Esophagus muscularis mucosa (tissue), 4 donors: ENCODE measurements at regions of chr5 and their contacts with region 1.

Region 1: DNA sequence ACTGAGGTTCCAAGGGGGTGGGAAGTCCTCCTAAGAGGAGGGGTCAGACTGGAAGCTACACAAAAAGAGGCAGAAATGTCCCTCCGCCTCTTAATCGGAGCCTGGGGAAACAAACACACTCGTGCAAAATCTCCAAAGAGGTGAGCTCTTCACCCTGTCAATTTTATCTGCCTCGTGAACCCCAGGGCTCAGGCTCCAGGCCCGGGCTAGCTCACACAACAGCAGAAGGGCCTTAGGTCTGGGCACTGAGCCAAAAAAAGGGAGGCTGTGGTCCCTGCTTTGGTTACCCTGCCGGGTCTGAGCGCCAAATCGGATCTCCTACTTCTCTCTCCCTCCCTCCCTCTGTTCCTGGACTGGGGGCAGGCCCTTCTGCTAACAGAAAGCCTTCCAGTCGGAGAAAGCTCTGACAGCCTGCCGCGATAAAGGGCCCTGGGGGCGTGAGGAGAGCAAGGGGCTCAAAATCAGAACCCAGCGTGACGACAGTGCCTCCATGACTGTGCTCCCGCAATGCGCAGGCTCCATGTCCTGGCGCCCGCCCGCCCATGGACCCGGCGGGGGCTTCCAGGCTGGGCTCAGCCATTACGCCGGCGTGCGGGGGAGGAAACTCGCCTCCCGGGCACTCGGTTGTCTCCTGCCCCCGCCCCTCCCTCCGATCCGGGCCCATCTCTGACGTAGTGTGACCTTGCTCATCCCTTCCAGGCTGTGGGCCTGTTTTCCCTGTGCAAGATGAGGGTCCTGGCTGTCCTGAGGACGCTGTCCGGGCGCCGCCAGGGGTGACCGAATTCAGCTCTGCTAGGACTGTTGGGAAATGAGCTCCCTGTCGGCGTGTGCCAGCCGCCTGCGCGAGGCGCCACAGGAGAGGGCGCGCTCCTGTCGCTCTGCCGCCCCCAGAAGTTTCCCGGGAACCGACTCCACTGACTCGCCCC is 865 bp upstream of the SLC22A4 start:
- DNase-seq: peak; percentile 97
- H3K4me3 ChIP-seq: peak overlapping the region; percentile 69 to 85 (median 72)
- H3K27ac ChIP-seq: peak overlapping the region; percentile 95 to 99 (median 97)
- H3K4me1 ChIP-seq: peaks cover 21 to 29% (median 26%) of the 10 kb centered on the region in 4 donors
- H3K27me3 ChIP-seq: no peaks in the 10 kb centered on the region
- CTCF ChIP-seq: peak in 1 of 3 experiments; percentile 18
- EP300 ChIP-seq: peak; percentile 12
- POLR2A ChIP-seq: no peak

Region 2: DNA sequence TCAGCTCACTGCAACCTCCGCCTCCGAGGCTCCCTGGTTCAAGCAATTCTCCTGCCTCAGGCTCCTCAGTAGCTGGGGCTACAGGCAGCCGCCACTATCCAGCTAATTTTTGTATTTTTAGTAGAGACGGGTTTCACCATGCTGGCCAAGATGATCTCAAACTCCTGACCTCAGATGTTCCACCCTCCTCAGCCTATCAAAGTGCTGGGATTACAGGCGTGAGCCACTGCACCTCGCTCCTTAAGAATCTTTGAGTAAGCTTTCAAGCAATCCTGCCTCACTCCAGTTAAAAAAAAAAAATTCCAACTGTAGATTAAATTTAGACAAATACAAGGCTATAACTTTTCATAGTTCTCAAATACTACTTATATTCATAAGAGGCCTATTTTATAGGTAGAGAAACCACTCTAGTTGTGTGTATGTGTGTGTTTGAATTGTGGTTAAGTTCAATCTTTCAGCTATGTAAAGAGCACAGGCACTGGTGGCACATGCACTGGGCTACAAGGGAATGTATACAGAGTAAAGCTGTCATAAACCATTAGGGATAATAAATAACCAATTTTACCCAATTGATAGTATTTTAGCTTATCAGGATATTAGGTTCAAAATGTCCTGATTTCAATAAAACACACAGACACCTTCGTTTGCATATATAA is 607.7 kb before region 1 on chr5:
- intact Hi-C with region 1: no loop called
- DNase-seq: no peak
- H3K4me3 ChIP-seq: no peak overlapping the region
- H3K27ac ChIP-seq: no peak overlapping the region
- H3K4me1 ChIP-seq: peaks cover 5 to 17% (median 14%) of the 10 kb centered on the region in 4 donors
- H3K27me3 ChIP-seq: no peaks in the 10 kb centered on the region
- CTCF ChIP-seq: no peak
- EP300 ChIP-seq: no peak
- POLR2A ChIP-seq: no peak

Region 3: GRCh38 chr5:132238169-132238744 is 55.1 kb before region 1 on chr5:
- intact Hi-C with region 1: loop called (anchors 5 kb)
- DNase-seq: no peak
- H3K4me3 ChIP-seq: no peak overlapping the region
- H3K27ac ChIP-seq: no peak overlapping the region
- H3K4me1 ChIP-seq: peaks cover 0 to 7% (median 0%) of the 10 kb centered on the region in 4 donors
- H3K27me3 ChIP-seq: no peaks in the 10 kb centered on the region
- CTCF ChIP-seq: peak; percentile 76 to 91 (median 83)
- EP300 ChIP-seq: no peak
- POLR2A ChIP-seq: no peak

Region 4: DNA sequence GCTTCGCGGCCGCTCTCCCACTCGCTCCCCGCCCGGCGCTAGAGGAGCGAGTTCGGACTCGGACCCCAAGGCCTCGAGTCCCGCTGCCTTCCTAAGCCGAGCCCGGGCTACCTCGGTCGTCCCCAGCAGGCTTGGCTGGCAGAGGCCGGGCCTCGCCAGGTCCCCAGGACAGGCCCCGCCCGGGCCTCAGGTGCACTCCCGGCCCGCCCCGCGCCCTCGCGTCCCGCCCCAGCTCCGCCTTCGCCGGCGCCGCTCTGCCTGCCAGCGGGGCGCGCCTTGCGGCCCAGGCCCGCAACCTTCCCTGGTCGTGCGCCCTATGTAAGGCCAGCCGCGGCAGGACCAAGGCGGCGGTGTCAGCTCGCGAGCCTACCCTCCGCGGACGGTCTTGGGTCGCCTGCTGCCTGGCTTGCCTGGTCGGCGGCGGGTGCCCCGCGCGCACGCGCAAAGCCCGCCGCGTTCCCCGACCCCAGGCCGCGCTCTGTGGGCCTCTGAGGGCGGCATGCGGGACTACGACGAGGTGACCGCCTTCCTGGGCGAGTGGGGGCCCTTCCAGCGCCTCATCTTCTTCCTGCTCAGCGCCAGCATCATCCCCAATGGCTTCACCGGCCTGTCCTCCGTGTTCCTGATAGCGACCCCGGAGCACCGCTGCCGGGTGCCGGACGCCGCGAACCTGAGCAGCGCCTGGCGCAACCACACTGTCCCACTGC is 76.3 kb after region 1 on chr5 and contains the start of gene SLC22A5:
- intact Hi-C with region 1: loop called (anchors 5 kb)
- DNase-seq: no peak
- H3K4me3 ChIP-seq: peak within 1 kb of the TSS; percentile 64 to 90 (median 80)
- H3K27ac ChIP-seq: peak within 1 kb of the TSS; percentile 81 to 92 (median 92)
- H3K4me1 ChIP-seq: peaks cover 18 to 43% (median 38%) of the 10 kb centered on the region in 4 donors
- H3K27me3 ChIP-seq: no peaks in the 10 kb centered on the region
- CTCF ChIP-seq: no peak
- EP300 ChIP-seq: no peak
- POLR2A ChIP-seq: no peak
- total RNA-seq, gene SLC22A5: 6.2 to 8.8 (median 7.5) TPM

Region 5: DNA sequence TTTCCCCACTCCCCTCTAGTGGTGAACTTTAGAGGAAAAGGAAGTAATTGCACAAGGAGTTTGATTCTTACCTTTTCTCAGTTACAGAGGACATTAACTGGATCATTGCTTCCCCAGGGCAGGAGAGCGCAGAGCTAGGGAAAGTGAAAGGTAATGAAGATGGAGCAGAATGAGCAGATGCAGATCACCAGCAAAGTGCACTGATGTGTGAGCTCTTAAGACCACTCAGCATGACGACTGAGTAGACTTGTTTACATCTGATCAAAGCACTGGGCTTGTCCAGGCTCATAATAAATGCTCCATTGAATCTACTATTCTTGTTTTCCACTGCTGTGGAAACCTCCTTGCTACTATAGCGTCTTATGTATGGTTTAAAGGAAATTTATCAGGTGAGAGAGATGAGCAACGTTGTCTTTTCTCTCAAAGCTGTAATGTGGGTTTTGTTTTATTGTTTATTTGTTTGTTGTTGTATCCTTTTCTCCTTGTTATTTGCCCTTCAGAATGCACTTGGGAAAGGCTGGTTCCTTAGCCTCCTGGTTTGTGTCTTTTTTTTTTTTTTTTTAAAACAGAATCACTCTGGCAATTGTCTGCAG is 101.4 kb after region 1 on chr5:
- intact Hi-C with region 1: no loop called
- DNase-seq: no peak
- H3K4me3 ChIP-seq: no peak overlapping the region
- H3K27ac ChIP-seq: no peak overlapping the region
- H3K4me1 ChIP-seq: peaks cover 9 to 18% (median 16%) of the 10 kb centered on the region in 4 donors
- H3K27me3 ChIP-seq: no peaks in the 10 kb centered on the region
- CTCF ChIP-seq: no peak
- EP300 ChIP-seq: no peak
- POLR2A ChIP-seq: no peak

Region 6: GRCh38 chr5:132490486-132491367 is 197.4 kb after region 1 on chr5 and contains the start of gene IRF1:
- intact Hi-C with region 1: no loop called
- DNase-seq: peak; percentile 99
- H3K4me3 ChIP-seq: peak within 1 kb of the TSS; percentile 84 to 93 (median 90)
- H3K27ac ChIP-seq: peak within 1 kb of the TSS; percentile 97 to 99 (median 98)
- H3K4me1 ChIP-seq: peaks cover 61 to 76% (median 74%) of the 10 kb centered on the region in 4 donors
- H3K27me3 ChIP-seq: no peaks in the 10 kb centered on the region
- CTCF ChIP-seq: no peak
- EP300 ChIP-seq: peak; percentile 18
- POLR2A ChIP-seq: peak; percentile 90
- total RNA-seq, gene IRF1: 20.6 to 289 (median 29.6) TPM

Region 7: DNA sequence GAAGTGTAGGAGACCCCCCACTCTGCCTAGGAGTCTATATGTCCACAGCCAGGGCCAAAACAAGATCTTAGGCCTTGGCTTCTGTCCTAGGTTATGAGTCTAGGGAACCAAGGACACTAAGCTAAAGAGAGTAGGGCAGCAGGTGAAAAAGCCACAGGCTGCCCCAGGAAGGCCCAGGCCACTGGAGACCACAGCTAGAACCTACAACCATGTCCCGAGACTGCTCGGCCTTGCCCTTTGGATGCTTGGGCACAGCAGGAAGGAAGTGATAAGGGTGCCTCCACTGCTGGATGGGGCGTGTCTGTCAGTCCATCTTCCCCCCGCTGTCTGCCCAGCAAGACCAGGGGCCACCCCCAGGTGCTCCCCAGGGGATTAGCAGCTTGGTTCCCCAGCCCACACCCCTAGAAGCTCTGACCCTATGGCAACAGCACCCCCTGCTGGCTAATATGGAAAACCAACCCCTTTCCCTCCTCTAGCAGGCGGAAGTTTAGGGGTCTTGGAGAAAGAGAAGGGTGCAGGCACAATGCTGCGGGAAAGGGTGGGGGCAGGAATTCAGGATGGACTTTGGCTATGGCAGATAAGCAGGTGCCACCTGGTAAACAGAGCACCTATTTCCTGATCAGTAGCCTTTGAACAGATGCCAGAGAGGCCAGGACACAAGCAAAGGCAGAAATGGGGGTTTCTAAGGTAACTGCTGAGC is 207.8 kb after region 1 on chr5:
- intact Hi-C with region 1: loop called (anchors 10 kb)
- DNase-seq: peak; percentile 92
- H3K4me3 ChIP-seq: no peak overlapping the region
- H3K27ac ChIP-seq: peak overlapping the region; percentile 94 to 98 (median 96)
- H3K4me1 ChIP-seq: peaks cover 38 to 76% (median 57%) of the 10 kb centered on the region in 4 donors
- H3K27me3 ChIP-seq: no peaks in the 10 kb centered on the region
- CTCF ChIP-seq: peak; percentile 83 to 91 (median 87)
- EP300 ChIP-seq: no peak
- POLR2A ChIP-seq: no peak